ENCODE measurements at regions of chr12 and their contacts with region 1.

Region 1: DNA sequence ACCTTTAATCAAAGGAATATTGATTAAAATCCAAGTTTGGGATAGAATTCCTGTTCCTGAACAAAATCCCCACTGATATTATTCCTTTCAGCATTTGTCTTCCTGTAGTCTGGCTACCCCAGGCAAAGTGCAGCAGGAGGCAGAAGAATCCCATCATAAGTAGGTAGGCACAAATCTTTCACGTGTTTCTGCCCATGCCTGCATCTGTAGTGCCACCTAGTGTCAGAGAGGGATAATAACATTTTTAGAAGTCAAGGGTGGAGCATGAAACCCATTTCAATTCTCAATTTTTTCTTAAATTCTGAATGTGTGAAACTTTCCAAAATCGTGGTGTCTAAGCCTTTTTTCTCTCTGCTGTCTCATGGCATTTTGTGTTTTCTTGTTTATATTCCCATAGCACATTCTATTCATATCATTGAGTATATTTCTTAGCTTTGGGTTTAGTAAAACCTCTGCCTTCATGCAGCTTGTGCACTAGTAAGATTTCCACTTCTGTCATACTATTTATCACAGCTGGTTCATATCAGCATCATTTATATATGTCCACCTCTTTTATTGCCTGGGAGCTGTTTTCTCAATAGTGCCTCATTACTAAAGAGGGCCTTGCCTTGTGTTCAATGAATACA is 47.8 kb upstream of the RERG start:
- DNase-seq: peak in 4 of 5 donors; percentile 18 to 50 (median 30)
- H3K4me3 ChIP-seq: no peak overlapping the region
- H3K27ac ChIP-seq: no peak overlapping the region
- H3K4me1 ChIP-seq: no peaks in the 10 kb centered on the region
- H3K27me3 ChIP-seq: no peaks in the 10 kb centered on the region
- CTCF ChIP-seq: peak; percentile 73 to 84 (median 82)
- EP300 ChIP-seq: no peak
- POLR2A ChIP-seq: no peak

Region 2: DNA sequence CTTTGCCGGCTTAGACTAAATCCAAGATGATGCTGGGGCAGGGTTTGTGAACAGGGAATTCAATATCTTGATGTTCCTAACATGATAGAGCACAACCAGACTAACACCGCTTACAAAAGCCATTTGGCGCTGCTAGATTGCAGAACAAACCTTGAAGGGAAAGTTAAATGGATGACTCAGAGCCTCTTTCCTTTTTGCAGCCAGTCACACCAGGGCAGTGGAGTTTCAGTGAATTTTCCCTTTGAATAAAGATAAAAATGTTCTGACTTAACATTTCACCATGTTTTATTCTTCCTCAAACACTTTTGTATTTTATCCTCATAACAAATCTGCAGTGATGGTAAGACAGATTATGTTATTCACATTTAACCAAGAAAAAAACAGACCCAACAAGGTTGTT is 248.9 kb before region 1 on chr12:
- intact Hi-C with region 1: no loop called
- DNase-seq: no peak
- H3K4me3 ChIP-seq: no peak overlapping the region
- H3K27ac ChIP-seq: no peak overlapping the region
- H3K4me1 ChIP-seq: no peaks in the 10 kb centered on the region
- H3K27me3 ChIP-seq: no peaks in the 10 kb centered on the region
- CTCF ChIP-seq: no peak
- EP300 ChIP-seq: no peak
- POLR2A ChIP-seq: no peak

Region 3: GRCh38 chr12:15151161-15152120 is 117.6 kb before region 1 on chr12:
- intact Hi-C with region 1: loop called in 2 of 4 experiments (anchors 5 kb)
- DNase-seq: peak in 1 of 5 donors; percentile 50
- H3K4me3 ChIP-seq: no peak overlapping the region
- H3K27ac ChIP-seq: peak overlapping the region; percentile 9 to 44
- H3K4me1 ChIP-seq: peaks cover 14% of the 10 kb centered on the region
- H3K27me3 ChIP-seq: no peaks in the 10 kb centered on the region
- CTCF ChIP-seq: peak; percentile 35 to 91 (median 78)
- EP300 ChIP-seq: no peak
- POLR2A ChIP-seq: no peak

Region 4: GRCh38 chr12:15227004-15227679 is 41.9 kb before region 1 on chr12:
- intact Hi-C with region 1: loop called in 1 of 4 experiments (anchors 5 kb)
- DNase-seq: peak in 2 of 5 donors; percentile 43
- H3K4me3 ChIP-seq: no peak overlapping the region
- H3K27ac ChIP-seq: no peak overlapping the region
- H3K4me1 ChIP-seq: peaks cover 2% of the 10 kb centered on the region
- H3K27me3 ChIP-seq: no peaks in the 10 kb centered on the region
- CTCF ChIP-seq: peak in 1 of 3 donors; percentile 19
- EP300 ChIP-seq: no peak
- POLR2A ChIP-seq: no peak

Region 5: GRCh38 chr12:15329891-15330290 is 60.9 kb after region 1 on chr12:
- intact Hi-C with region 1: loop called in 1 of 4 experiments (anchors 2 kb)
- DNase-seq: no peak
- H3K4me3 ChIP-seq: no peak overlapping the region
- H3K27ac ChIP-seq: no peak overlapping the region
- H3K4me1 ChIP-seq: no peaks in the 10 kb centered on the region
- H3K27me3 ChIP-seq: no peaks in the 10 kb centered on the region
- CTCF ChIP-seq: no peak
- EP300 ChIP-seq: no peak
- POLR2A ChIP-seq: no peak